CD4-positive, alpha-beta memory T cell (primary cell): ENCODE measurements at regions of chr16 and their contacts with region 1.

Region 1: GRCh38 chr16:67521095-67521804 is 7.4 kb upstream of the RIPOR1 start:
- DNase-seq: peak; percentile 93 to 98 (median 94)
- H3K4me3 ChIP-seq: peak overlapping the region; percentile 72 to 98
- H3K4me3 Mint-ChIP-seq: peak overlapping the region; percentile 89 to 95 (median 91)
- H3K27ac ChIP-seq: peak overlapping the region; percentile 92
- H3K27ac Mint-ChIP-seq: peak overlapping the region; percentile 98 to 100 (median 99)
- H3K4me1 ChIP-seq: peaks cover 5% of the 10 kb centered on the region
- H3K4me1 Mint-ChIP-seq: peaks cover 9 to 26% (median 12%) of the 10 kb centered on the region in 4 donors
- H3K27me3 ChIP-seq: no peaks in the 10 kb centered on the region
- H3K27me3 Mint-ChIP-seq: no peaks in the 10 kb centered on the region

Region 2: DNA sequence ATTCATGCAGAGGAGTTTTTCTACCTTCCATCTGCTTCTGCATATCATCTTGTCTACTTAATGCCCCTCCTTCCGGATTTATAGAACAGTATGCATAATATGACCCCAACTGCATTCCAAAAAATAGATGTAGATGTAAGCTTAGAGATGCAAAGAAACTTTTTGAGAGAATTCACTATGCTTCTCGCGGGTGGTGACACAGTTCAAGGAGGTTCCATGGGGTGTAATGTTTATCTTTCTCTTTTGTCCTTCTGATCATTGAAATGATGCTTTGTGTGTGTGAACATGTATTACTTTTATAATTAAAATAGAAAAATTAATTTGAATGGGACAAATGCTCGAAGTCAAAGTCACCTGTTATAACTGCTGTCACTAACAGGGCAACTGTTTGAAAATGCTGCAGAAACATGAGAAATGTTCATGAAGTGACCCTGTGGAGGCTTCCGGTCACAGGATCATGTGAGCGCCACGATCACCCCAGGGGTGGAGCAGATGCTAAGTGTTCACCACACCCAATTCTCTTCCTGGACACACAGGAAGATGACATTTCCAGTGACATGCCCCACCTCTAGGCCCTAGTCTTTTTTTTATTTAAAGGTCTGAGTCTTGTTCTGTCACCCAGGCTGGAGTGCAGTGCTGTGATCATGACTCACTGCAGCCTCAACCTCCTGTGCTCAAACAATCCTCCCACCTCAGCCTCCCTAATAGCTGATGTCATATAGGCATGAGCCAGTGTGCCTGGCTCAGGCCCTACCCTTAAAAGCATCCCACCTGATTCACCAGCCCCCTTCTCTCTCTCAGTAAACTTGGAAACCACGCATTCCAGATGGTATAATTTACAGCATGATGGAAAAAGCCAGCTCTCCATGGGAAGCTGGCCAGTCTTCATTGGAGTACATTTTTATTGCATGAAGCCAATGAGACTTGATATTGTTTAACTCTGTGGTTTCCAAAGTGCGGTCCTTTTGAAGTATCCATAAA is 16.9 kb before region 1 on chr16:
- CTCF ChIA-PET with region 1: interaction called, 712 read pairs
- POLR2A ChIA-PET with region 1: interaction called, 5 read pairs
- intact Hi-C with region 1: no loop called
- DNase-seq: peak; percentile 42 to 62 (median 48)
- H3K4me3 ChIP-seq: no peak overlapping the region
- H3K4me3 Mint-ChIP-seq: peak overlapping the region in 7 of 8 donors; percentile 50 to 86 (median 78)
- H3K27ac ChIP-seq: peak overlapping the region; percentile 48
- H3K27ac Mint-ChIP-seq: peak overlapping the region; percentile 78 to 98 (median 97)
- H3K4me1 ChIP-seq: peaks cover 56% of the 10 kb centered on the region
- H3K4me1 Mint-ChIP-seq: peaks cover 35 to 61% (median 47%) of the 10 kb centered on the region in 4 donors
- H3K27me3 ChIP-seq: no peaks in the 10 kb centered on the region
- H3K27me3 Mint-ChIP-seq: no peaks in the 10 kb centered on the region

Region 3: GRCh38 chr16:67555795-67556212 is 34.6 kb after region 1 on chr16:
- CTCF ChIA-PET with region 1: interaction called, 26 read pairs
- POLR2A ChIA-PET with region 1: interaction called, 4 read pairs
- intact Hi-C with region 1: no loop called
- DNase-seq: peak; percentile 36 to 68 (median 40)
- H3K4me3 ChIP-seq: no peak overlapping the region
- H3K4me3 Mint-ChIP-seq: peak overlapping the region in 7 of 8 donors; percentile 18 to 83 (median 70)
- H3K27ac ChIP-seq: peak overlapping the region; percentile 54
- H3K27ac Mint-ChIP-seq: peak overlapping the region; percentile 79 to 93 (median 88)
- H3K4me1 ChIP-seq: peaks cover 57% of the 10 kb centered on the region
- H3K4me1 Mint-ChIP-seq: peaks cover 32 to 58% (median 41%) of the 10 kb centered on the region in 4 donors
- H3K27me3 ChIP-seq: no peaks in the 10 kb centered on the region
- H3K27me3 Mint-ChIP-seq: no peaks in the 10 kb centered on the region

Region 4: DNA sequence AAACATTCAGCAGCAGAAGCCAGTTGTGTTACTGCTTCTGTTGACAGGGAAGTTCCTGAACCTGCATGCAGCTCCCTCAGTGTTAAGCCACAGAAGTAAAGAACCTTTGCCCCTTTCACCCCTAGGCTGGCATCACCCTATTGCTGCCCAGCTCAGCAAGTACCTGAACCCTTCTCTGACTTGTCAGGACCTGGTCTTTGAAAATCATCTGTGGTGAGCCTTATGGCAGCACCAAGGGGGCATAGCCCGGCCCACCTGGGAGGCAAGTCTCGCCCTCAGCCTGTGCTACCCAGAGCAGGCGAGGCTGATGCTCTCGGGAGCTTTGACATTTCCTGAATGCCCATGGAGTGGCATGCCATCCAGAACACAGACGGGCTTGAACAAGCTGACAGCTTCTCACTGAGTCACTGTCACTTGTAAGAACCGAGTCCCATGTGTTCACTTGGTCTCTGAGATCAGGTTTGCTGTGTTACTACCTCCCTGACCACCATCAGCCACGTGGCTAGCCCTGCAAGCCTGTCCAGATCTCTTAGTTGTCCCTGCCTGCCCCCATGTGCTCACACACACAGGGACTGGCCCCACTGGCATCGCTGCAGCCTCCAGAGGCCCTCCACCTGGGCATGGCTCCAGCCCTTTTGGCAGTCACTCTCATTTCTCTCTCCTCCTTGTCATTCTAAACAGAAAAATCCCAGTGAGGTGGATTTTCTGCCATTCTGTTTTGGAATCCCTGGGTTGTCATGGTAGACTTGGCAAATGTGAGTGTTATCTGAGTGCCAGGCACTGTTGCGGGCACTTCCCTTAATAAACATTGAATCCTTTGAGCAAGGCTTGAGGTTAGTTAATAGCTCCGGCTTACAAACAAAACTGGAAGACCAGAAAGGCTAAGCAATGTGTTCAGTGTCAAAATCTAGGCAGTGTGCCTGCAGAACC is 120.8 kb after region 1 on chr16:
- CTCF ChIA-PET with region 1: interaction called, 84 read pairs
- POLR2A ChIA-PET with region 1: interaction called, 25 read pairs
- intact Hi-C with region 1: loop called (anchors 2 kb)
- DNase-seq: no peak
- H3K4me3 ChIP-seq: no peak overlapping the region
- H3K4me3 Mint-ChIP-seq: no peak overlapping the region
- H3K27ac ChIP-seq: no peak overlapping the region
- H3K27ac Mint-ChIP-seq: peak overlapping the region in 1 of 7 donors; percentile 13
- H3K4me1 ChIP-seq: peaks cover 30% of the 10 kb centered on the region
- H3K4me1 Mint-ChIP-seq: peaks cover 2 to 28% (median 11%) of the 10 kb centered on the region in 4 donors
- H3K27me3 ChIP-seq: no peaks in the 10 kb centered on the region
- H3K27me3 Mint-ChIP-seq: no peaks in the 10 kb centered on the region

Region 5: GRCh38 chr16:67806428-67807147 is 285.3 kb after region 1 on chr16 and contains the starts of genes RANBP10 and TSNAXIP1:
- CTCF ChIA-PET with region 1: interaction called, 4 read pairs
- POLR2A ChIA-PET with region 1: interaction called, 5 read pairs
- intact Hi-C with region 1: loop called (anchors 2 kb)
- DNase-seq: peak; percentile 97 to 99 (median 99)
- H3K4me3 ChIP-seq: peak within 1 kb of the TSS; percentile 91 to 93
- H3K4me3 Mint-ChIP-seq: peak within 1 kb of the TSS; percentile 88 to 95 (median 90)
- H3K27ac ChIP-seq: peak within 1 kb of the TSS; percentile 95
- H3K27ac Mint-ChIP-seq: peak within 1 kb of the TSS; percentile 85 to 98 (median 95)
- H3K4me1 ChIP-seq: peaks cover 43% of the 10 kb centered on the region
- H3K4me1 Mint-ChIP-seq: peaks cover 26 to 52% (median 36%) of the 10 kb centered on the region in 4 donors
- H3K27me3 ChIP-seq: no peaks in the 10 kb centered on the region
- H3K27me3 Mint-ChIP-seq: no peaks in the 10 kb centered on the region
- total RNA-seq, gene RANBP10: 25.6 to 27.8 TPM
- total RNA-seq, gene TSNAXIP1: 0.44 to 0.64 TPM

Region 6: GRCh38 chr16:68040507-68041288 is 519.4 kb after region 1 on chr16:
- CTCF ChIA-PET with region 1: interaction called, 9 read pairs
- POLR2A ChIA-PET with region 1: no interaction called
- intact Hi-C with region 1: loop called (anchors 2 kb)
- DNase-seq: peak; percentile 84 to 88 (median 85)
- H3K4me3 ChIP-seq: no peak overlapping the region
- H3K4me3 Mint-ChIP-seq: no peak overlapping the region
- H3K27ac ChIP-seq: no peak overlapping the region
- H3K27ac Mint-ChIP-seq: peak overlapping the region; percentile 29 to 77 (median 44)
- H3K4me1 ChIP-seq: peaks cover 9% of the 10 kb centered on the region
- H3K4me1 Mint-ChIP-seq: peaks cover 6 to 16% (median 12%) of the 10 kb centered on the region in 4 donors
- H3K27me3 ChIP-seq: no peaks in the 10 kb centered on the region
- H3K27me3 Mint-ChIP-seq: no peaks in the 10 kb centered on the region